ENCODE measurements at regions of chr18 and their contacts with region 1.

Region 1: GRCh38 chr18:23515911-23516546 is 12.7 kb downstream of the RMC1 start:
- DNase-seq: peak; percentile 54 to 77
- ATAC-seq: peak; percentile 89 to 95 (median 92)
- H3K4me3 ChIP-seq: no peak overlapping the region
- H3K27ac ChIP-seq: no peak overlapping the region
- H3K4me1 ChIP-seq: peaks cover 0 to 15% (median 0%) of the 10 kb centered on the region in 9 donors
- H3K27me3 ChIP-seq: no peaks in the 10 kb centered on the region
- CTCF ChIP-seq: peak; percentile 76 to 94 (median 86)

Region 2: DNA sequence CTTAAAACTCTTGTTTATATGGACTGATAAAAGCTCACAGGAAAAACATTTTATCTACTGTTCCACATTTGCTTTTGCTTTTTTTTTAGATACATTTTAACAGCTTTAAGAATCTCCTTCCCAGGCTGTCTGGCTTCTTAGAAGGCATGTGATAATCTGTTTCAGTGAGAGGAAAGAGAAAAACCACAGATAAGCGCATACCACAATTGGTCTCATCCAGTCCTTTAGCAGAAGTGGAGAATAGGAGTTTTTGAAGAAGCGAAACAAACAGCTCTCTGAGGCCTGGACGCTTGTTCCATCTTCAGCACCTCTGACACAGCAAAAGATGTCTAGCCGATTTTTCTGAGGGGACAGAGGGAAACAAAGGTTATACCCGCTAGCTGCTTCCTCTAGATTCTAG is 24.8 kb after region 1 on chr18:
- intact Hi-C with region 1: no loop called
- DNase-seq: no peak
- ATAC-seq: peak in 4 of 8 donors; percentile 9 to 80 (median 52)
- H3K4me3 ChIP-seq: no peak overlapping the region
- H3K27ac ChIP-seq: peak overlapping the region in 2 of 10 donors; percentile 45 to 84
- H3K4me1 ChIP-seq: peaks cover 0 to 44% (median 14%) of the 10 kb centered on the region in 9 donors
- H3K27me3 ChIP-seq: no peaks in the 10 kb centered on the region
- CTCF ChIP-seq: no peak

Region 3: GRCh38 chr18:23580677-23581367 is 64.8 kb after region 1 on chr18:
- intact Hi-C with region 1: loop called in 8 of 10 experiments (anchors 2 to 5 kb)
- DNase-seq: no peak
- ATAC-seq: no peak
- H3K4me3 ChIP-seq: no peak overlapping the region
- H3K27ac ChIP-seq: no peak overlapping the region
- H3K4me1 ChIP-seq: peaks cover 0 to 72% (median 22%) of the 10 kb centered on the region in 9 donors
- H3K27me3 ChIP-seq: no peaks in the 10 kb centered on the region
- CTCF ChIP-seq: no peak

Region 4: DNA sequence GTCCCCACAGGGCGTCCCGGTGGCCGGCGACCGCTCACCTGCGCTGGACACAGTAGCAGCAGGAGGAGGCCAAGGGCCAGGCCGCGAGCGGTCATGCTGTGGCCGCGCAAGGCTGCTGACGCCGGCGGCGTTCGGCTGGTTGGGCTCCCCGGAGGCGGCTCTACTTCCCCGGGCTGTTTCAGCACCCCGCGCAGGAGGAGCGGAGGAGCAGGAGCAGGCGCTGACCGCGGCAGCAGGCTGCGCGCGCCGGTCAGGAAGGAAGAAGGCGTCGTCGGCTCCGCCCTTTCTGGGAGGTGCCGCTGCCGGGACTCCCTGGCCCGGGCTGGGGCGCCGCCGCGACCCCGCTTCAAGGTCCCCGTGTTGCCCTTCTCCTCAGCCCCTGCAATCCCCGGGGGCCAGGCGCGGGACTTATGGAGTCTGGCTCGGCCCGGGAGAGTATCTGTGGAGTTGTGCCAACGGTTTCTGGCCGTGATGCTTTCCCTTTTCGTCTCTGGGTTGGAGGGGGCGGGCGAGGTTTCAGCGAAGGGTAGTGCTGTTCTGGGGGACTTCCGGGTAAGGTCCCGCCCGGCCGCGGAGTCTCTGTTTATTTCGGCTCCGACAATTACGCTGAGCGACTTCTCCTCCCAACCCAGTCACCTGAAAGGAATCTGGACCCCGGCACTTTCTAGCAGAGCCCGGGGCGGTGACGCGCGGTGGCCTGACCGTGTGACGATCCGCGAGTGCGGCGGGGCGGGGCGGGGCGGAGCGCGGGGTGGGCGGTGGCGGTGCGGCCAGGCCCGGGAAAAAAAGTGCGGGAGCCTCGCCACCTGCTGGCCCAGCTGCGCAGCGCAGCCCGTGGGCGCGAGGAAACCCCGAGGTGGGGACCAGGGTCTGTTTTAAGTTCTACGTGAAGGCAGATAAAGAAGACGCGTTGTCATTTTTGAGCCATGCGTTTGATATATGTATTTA is 70.5 kb after region 1 on chr18 and contains the start of gene NPC1:
- intact Hi-C with region 1: loop called (anchors 1 to 5 kb)
- DNase-seq: peak; percentile 92 to 95
- ATAC-seq: peak; percentile 98 to 99 (median 99)
- H3K4me3 ChIP-seq: peak within 1 kb of the TSS; percentile 77 to 97 (median 91)
- H3K27ac ChIP-seq: peak within 1 kb of the TSS; percentile 94 to 100 (median 98)
- H3K4me1 ChIP-seq: peaks cover 0 to 46% (median 24%) of the 10 kb centered on the region in 9 donors
- H3K27me3 ChIP-seq: peaks cover 0 to 12% (median 0%) of the 10 kb centered on the region in 7 donors
- CTCF ChIP-seq: peak; percentile 90 to 100 (median 97)
- total RNA-seq, gene NPC1: 9.7 to 21.2 (median 13.3) TPM

Region 5: GRCh38 chr18:23689031-23689615 is 173.1 kb after region 1 on chr18 and contains the start of gene LAMA3:
- intact Hi-C with region 1: loop called in 1 of 10 experiments (anchors 10 kb)
- DNase-seq: peak; percentile 45 to 71
- ATAC-seq: peak; percentile 88 to 94 (median 91)
- H3K4me3 ChIP-seq: peak within 1 kb of the TSS; percentile 53 to 76 (median 65)
- H3K27ac ChIP-seq: peak within 1 kb of the TSS in 9 of 10 donors; percentile 29 to 74 (median 53)
- H3K4me1 ChIP-seq: peaks cover 0 to 29% (median 19%) of the 10 kb centered on the region in 9 donors
- H3K27me3 ChIP-seq: peaks cover 0 to 32% (median 9%) of the 10 kb centered on the region in 7 donors
- CTCF ChIP-seq: peak in 6 of 9 donors; percentile 16 to 59 (median 48)
- total RNA-seq, gene LAMA3: 0.89 to 5.3 (median 3.3) TPM

Region 6: DNA sequence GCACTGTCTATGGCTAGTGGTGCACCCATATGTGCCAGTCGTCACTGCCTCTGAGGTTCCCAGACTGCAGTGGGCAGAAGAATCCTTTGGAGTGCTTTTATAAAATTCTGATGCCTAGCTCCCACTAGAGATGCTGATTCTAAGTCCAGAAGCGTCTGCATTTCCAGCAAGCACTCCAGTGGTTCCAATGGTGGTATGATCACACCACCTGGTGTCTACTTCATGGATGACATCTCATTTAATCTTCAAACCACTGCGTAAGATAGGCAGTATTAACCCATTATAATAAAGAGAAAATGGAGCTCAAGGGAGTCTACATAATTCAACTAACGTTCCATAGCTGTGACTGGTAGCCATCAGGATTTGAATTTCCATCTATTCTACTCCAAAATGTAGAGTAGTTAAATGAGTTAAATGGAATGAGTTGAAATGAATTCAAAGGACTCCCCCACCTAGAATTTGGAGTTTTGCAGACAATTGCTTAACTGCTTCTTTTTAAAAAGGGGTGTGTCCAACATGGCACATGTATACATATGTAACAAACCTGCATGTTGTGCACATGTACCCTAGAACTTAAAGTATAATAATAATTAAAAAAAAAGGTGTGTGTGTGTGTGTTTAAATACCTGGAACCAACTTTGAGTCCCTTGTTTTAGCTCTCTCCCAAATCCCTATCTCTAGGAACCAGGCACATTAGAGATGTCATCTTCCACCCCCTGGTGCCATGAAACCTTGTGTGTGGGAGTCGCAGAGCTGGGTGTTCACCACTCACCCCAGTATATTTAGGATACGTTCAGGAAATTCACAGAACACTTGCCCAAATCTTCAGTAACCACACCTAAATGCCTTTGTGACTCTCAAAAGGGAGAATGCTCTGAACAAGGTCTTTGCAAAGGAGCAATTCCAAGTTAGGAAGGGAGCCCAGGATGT is 187.3 kb after region 1 on chr18:
- intact Hi-C with region 1: loop called in 2 of 10 experiments (anchors 10 kb)
- DNase-seq: peak in 1 of 2 donors; percentile 29
- ATAC-seq: peak in 7 of 8 donors; percentile 65 to 88 (median 80)
- H3K4me3 ChIP-seq: no peak overlapping the region
- H3K27ac ChIP-seq: peak overlapping the region in 2 of 10 donors; percentile 6 to 16
- H3K4me1 ChIP-seq: peaks cover 0 to 11% (median 0%) of the 10 kb centered on the region in 9 donors
- H3K27me3 ChIP-seq: peaks cover 0 to 7% (median 0%) of the 10 kb centered on the region in 7 donors
- CTCF ChIP-seq: peak; percentile 27 to 78 (median 61)

Region 7: GRCh38 chr18:23719634-23720201 is 203.7 kb after region 1 on chr18:
- intact Hi-C with region 1: loop called in 1 of 10 experiments (anchors 10 kb)
- DNase-seq: no peak
- ATAC-seq: peak in 6 of 8 donors; percentile 33 to 91 (median 55)
- H3K4me3 ChIP-seq: no peak overlapping the region
- H3K27ac ChIP-seq: peak overlapping the region in 1 of 10 donors; percentile 2
- H3K4me1 ChIP-seq: peaks cover 0 to 25% (median 10%) of the 10 kb centered on the region in 9 donors
- H3K27me3 ChIP-seq: peaks cover 0 to 6% (median 0%) of the 10 kb centered on the region in 7 donors
- CTCF ChIP-seq: no peak

Region 8: GRCh38 chr18:23812546-23813440 is 296.8 kb after region 1 on chr18:
- intact Hi-C with region 1: loop called in 4 of 10 experiments (anchors 5 to 10 kb)
- DNase-seq: no peak
- ATAC-seq: no peak
- H3K4me3 ChIP-seq: no peak overlapping the region
- H3K27ac ChIP-seq: no peak overlapping the region
- H3K4me1 ChIP-seq: peaks cover 0 to 14% (median 0%) of the 10 kb centered on the region in 9 donors
- H3K27me3 ChIP-seq: no peaks in the 10 kb centered on the region
- CTCF ChIP-seq: peak; percentile 28 to 71 (median 62)

Region 9: GRCh38 chr18:23828426-23828825 is 312.4 kb after region 1 on chr18:
- intact Hi-C with region 1: no loop called
- DNase-seq: no peak
- ATAC-seq: peak in 1 of 8 donors; percentile 23
- H3K4me3 ChIP-seq: no peak overlapping the region
- H3K27ac ChIP-seq: no peak overlapping the region
- H3K4me1 ChIP-seq: peaks cover 0 to 31% (median 11%) of the 10 kb centered on the region in 9 donors
- H3K27me3 ChIP-seq: no peaks in the 10 kb centered on the region
- CTCF ChIP-seq: no peak